ENCODE measurements at regions of chr4 and their contacts with region 1.

Region 1: DNA sequence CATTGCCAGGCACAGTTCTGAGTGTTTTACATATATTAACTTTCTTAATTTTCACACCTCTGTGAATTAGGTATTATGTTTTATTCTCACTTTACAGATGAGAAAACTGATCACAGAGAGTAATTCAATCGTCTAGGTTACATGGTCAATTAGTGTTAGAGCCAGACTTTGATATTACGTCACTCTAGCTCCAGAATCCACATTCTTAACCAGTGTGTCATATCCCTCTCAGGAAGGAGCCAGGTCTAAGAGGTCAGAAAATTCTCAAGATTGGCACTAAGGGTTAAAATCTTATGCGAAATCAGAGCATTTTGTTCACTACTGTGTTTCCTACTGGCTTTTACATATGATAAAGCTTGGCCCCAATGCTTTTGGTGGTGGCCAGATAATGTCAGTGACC is 7.4 kb downstream of the DMP1 start:
- DNase-seq: no peak
- ATAC-seq: no peak
- H3K4me3 ChIP-seq: no peak overlapping the region
- H3K27ac ChIP-seq: no peak overlapping the region
- H3K4me1 ChIP-seq: no peaks in the 10 kb centered on the region
- H3K27me3 ChIP-seq: no peaks in the 10 kb centered on the region

Region 2: DNA sequence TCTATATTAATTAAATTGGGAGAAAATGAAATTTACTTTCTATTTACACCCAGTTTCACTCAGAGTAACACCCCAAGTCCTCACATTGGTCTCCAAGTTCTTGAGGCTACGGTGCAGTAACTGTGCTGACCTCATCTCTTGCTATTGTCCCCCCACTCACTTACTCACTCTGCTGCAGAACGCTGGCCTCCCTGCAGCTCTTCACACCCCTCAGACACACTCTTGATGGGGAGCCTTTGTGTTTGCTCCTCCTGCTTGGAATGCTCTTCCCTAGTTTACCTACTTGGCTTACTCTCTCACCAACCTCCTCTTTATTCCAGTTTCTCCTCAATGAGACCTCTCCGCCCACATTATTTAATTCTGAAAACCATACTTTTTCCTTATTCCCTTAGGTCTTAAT is 106.2 kb before region 1 on chr4:
- intact Hi-C with region 1: loop called in 1 of 2 experiments (anchors 5 kb)
- DNase-seq: no peak
- ATAC-seq: no peak
- H3K4me3 ChIP-seq: no peak overlapping the region
- H3K27ac ChIP-seq: no peak overlapping the region
- H3K4me1 ChIP-seq: peaks cover 3 to 6% of the 10 kb centered on the region in 2 donors
- H3K27me3 ChIP-seq: no peaks in the 10 kb centered on the region

Region 3: GRCh38 chr4:87749883-87750282 is 92.4 kb after region 1 on chr4:
- intact Hi-C with region 1: no loop called
- DNase-seq: no peak
- ATAC-seq: no peak
- H3K4me3 ChIP-seq: no peak overlapping the region
- H3K27ac ChIP-seq: no peak overlapping the region
- H3K4me1 ChIP-seq: no peaks in the 10 kb centered on the region
- H3K27me3 ChIP-seq: no peaks in the 10 kb centered on the region

Measured in aorta (tissue), 5 donors.